ENCODE measurements at regions of chr15 and their contacts with region 1.

Region 1: GRCh38 chr15:89105147-89105546 is 16.9 kb downstream of the ABHD2 start:
- DNase-seq: peak; percentile 99
- ATAC-seq: peak; percentile 69
- H3K4me3 ChIP-seq: no peak overlapping the region
- H3K27ac ChIP-seq: peak overlapping the region; percentile 97; the same call in 1 of the 2 replicates
- H3K4me1 ChIP-seq: peaks cover 47% of the 10 kb centered on the region
- H3K27me3 ChIP-seq: no peaks in the 10 kb centered on the region
- CTCF ChIP-seq: no peak
- POLR2A ChIP-seq: no peak
- RAD21 ChIP-seq: no peak

Region 2: DNA sequence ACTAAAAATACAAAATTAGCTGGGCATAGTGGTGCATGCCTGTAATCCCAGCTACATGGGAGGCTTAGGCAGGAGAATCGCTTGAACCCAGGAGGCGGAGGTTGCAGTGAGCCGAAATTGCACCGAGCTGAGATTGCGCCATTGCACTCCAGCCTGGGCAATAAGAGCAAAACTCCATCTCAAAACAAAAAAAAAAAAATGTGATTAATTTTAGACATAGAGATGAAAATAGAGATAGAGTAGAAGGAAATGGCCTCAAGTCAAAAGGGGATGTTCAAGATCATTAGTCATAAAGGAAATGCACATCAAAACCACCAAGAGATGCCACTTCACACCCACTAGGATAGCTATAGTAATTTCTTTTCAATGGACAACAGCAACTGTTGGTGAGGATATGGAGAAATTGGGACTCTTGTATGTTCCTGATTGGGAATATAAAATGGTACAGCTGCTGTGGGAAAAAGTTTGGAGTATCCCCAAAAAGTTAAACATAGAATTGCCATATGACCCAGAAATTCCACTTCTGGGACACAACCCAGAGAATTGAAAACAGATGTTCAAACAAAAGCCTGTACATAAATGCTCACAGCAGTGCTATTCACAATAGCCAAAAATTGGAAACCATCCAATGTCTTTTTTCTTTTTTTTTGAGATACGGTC is 38.5 kb after region 1 on chr15:
- CTCF ChIA-PET with region 1: interaction called, 4 read pairs
- POLR2A ChIA-PET with region 1: no interaction called
- dilution Hi-C with region 1: no loop called
- in situ Hi-C with region 1: no loop called
- intact Hi-C with region 1: loop called (anchors 5 kb)
- DNase-seq: peak; percentile 90
- ATAC-seq: peak; percentile 36
- H3K4me3 ChIP-seq: no peak overlapping the region
- H3K27ac ChIP-seq: peak overlapping the region; percentile 40; the same call in 1 of the 2 replicates
- H3K4me1 ChIP-seq: peaks cover 20% of the 10 kb centered on the region
- H3K27me3 ChIP-seq: no peaks in the 10 kb centered on the region
- CTCF ChIP-seq: no peak
- POLR2A ChIP-seq: no peak
- RAD21 ChIP-seq: no peak

Region 3: DNA sequence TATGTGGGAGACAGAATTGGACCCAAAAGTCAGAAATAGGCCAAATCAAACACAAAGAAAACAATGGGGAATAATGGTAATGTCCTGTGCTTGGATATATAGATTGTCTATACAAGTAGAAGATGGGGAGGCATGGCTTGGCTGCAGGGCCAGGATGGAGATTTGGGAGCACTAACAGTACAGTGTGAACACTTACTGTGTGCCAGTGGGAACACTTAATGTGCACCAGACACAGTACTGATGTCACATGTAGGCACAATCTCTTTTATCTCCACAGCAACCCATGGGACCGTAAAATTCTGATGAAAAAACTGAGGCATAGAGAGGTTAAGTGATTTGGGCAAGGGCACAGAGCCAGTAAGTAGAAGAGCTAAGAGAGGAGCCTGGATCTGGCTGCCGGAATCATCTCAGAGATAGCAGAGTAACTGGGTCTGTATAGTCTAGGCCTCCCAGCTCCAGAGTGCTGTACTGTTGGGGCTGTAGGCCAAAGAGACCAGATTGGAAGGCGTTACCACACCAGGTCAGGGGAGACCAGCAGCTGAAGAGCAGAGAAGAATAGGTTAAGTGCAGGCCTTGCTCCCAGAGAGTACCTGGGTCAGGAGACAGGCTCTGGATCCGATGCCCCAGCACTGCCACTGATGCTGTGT is 52.9 kb after region 1 on chr15:
- CTCF ChIA-PET with region 1: no interaction called
- POLR2A ChIA-PET with region 1: no interaction called
- dilution Hi-C with region 1: no loop called
- in situ Hi-C with region 1: no loop called
- intact Hi-C with region 1: no loop called
- DNase-seq: no peak
- ATAC-seq: no peak
- H3K4me3 ChIP-seq: no peak overlapping the region
- H3K27ac ChIP-seq: no peak overlapping the region
- H3K4me1 ChIP-seq: no peaks in the 10 kb centered on the region
- H3K27me3 ChIP-seq: no peaks in the 10 kb centered on the region
- CTCF ChIP-seq: no peak
- POLR2A ChIP-seq: no peak
- RAD21 ChIP-seq: no peak

Region 4: GRCh38 chr15:89750560-89751542 is 645.7 kb after region 1 on chr15 and contains the start of gene MESP1:
- CTCF ChIA-PET with region 1: no interaction called
- POLR2A ChIA-PET with region 1: no interaction called
- dilution Hi-C with region 1: no loop called
- in situ Hi-C with region 1: no loop called
- intact Hi-C with region 1: no loop called
- DNase-seq: peak; percentile 87
- ATAC-seq: peak; percentile 97
- H3K4me3 ChIP-seq: peak within 1 kb of the TSS; percentile 65
- H3K27ac ChIP-seq: peak within 1 kb of the TSS; percentile 19; the same call in 1 of the 2 replicates
- H3K4me1 ChIP-seq: peaks cover 2% of the 10 kb centered on the region; the same call in 1 of the 2 replicates
- H3K27me3 ChIP-seq: peaks cover 33% of the 10 kb centered on the region
- CTCF ChIP-seq: peak; percentile 89
- POLR2A ChIP-seq: no peak
- RAD21 ChIP-seq: peak; percentile 64
- total RNA-seq, gene MESP1: under 0.01 TPM in 1 of 2 replicates, not detected in the other